Dendritic cell treated with granulocyte-macrophage colony-stimulating factor and Interleukin-4, amounts not matched to agents 40 ng/mL and 50 ng/mL, for 4 days (primary cell): ENCODE measurements at regions of chr2 and their contacts with region 1.

Region 1: GRCh38 chr2:39227628-39228412 is 15.9 kb downstream of the CDKL4 start:
- H3K4me3 Mint-ChIP-seq: peak overlapping the region; percentile 17
- H3K27ac Mint-ChIP-seq: no peak overlapping the region
- H3K4me1 Mint-ChIP-seq: peaks cover 5% of the 10 kb centered on the region
- H3K27me3 Mint-ChIP-seq: peaks cover 1% of the 10 kb centered on the region

Region 2: GRCh38 chr2:38947240-38948239 is 280.3 kb before region 1 on chr2:
- intact Hi-C with region 1: loop called (anchors 2 kb)
- H3K4me3 Mint-ChIP-seq: no peak overlapping the region
- H3K27ac Mint-ChIP-seq: no peak overlapping the region
- H3K4me1 Mint-ChIP-seq: peaks cover 30% of the 10 kb centered on the region
- H3K27me3 Mint-ChIP-seq: no peaks in the 10 kb centered on the region

Region 3: DNA sequence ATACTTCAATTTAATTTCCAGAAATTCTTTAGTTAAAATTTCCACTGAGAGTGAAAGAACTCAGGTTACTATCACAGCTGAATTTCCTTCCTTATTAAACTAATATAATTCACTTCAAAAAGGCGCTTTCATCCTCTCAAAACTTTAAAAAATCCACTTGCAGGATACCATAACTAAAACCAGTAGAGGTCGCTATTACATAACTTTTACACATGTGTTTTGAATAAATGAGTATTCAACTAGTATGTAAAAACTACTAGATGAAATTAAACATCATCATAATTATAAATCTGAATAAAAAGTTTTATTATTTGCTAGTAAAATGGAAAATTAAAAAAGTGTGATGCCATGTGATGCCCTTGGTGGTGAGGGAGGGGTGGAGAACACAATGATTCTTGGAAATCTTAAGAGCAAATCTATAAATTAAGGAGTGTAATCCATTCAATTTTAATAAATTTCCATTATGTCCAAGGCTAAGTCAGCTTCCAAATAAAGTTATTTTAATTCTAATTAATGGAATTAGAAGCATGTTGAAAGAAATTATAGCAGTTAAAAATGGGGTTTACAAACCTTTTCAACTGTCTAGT is 168.4 kb before region 1 on chr2:
- intact Hi-C with region 1: loop called (anchors 1 kb)
- H3K4me3 Mint-ChIP-seq: no peak overlapping the region
- H3K27ac Mint-ChIP-seq: no peak overlapping the region
- H3K4me1 Mint-ChIP-seq: no peaks in the 10 kb centered on the region
- H3K27me3 Mint-ChIP-seq: no peaks in the 10 kb centered on the region

Region 4: DNA sequence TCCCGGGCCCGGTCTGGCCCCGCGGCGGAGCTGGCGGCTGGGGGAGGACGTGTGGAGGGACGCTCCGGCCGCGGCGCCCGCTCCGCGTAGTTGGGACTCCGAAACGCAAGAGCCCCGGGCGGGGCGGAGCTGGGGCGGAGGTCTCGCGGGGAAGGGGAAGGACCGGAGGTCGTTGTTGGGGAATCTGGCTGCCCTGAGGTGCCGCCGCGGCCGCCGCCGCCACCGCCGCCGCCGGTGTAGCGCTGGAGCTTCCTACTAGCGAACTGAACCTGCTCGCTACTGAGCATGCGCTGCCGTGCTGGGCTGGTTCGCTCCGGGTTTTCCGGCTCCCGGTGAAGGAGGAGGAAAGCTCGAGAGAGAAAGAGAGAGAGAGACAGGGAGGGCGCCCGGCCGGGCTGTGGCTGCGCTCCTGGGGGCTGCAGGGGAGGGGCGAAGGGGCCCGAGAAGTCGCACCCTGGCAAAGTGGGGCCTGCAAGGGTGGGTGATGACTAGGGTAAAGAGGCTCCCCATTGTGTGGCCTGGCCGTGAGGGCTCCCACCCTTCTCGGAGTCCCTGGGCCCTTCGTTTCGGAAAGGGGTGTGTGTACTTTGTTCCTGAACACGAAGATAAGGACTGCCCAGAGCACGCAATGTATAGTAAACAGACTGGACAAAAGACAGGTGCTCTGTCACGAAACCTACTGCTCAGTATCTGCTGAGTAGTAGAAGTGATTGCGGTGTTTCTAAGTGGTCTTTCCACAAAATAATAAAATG is 106.9 kb before region 1 on chr2 and contains the start of gene SOS1:
- intact Hi-C with region 1: loop called (anchors 1 kb)
- H3K4me3 Mint-ChIP-seq: peak within 1 kb of the TSS; percentile 91
- H3K27ac Mint-ChIP-seq: peak within 1 kb of the TSS; percentile 97
- H3K4me1 Mint-ChIP-seq: peaks cover 72% of the 10 kb centered on the region
- H3K27me3 Mint-ChIP-seq: no peaks in the 10 kb centered on the region

Region 5: GRCh38 chr2:39435741-39436591 is 208.1 kb after region 1 on chr2:
- intact Hi-C with region 1: no loop called
- H3K4me3 Mint-ChIP-seq: peak overlapping the region; percentile 92
- H3K27ac Mint-ChIP-seq: peak overlapping the region; percentile 89
- H3K4me1 Mint-ChIP-seq: peaks cover 52% of the 10 kb centered on the region
- H3K27me3 Mint-ChIP-seq: peaks cover 7% of the 10 kb centered on the region

Region 6: DNA sequence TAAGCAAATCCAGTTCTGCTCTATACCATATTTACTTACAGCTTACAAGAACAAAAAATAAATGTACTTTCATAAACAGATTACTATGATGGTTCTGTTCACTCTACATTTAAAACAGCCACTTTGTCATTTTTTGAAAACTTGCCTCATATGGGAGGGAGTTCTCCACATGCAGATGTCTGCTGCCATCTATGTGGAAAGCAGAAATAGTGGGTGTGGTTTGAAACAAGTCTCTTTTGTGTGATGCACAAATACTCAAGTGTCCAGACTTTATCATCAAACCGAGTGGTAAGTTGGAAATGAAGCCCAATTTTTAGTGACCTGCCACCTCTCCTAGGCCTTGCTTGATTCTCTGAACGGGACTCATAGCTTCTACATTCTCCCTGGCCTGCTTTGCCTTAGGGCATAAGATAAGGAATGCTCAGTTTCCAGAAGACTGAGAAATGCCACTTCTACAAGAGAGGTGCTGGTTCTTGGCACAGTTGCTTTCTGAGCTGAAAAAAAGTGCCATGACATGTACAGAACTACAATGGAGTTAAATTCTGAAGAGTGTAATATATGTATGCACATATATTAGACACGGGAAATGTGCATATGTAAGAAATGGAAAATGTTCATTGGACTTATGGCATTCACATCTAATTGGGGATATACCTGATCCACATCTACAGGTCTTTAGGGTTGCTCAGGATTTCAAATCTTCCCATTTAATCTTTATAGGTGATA is 1003.0 kb after region 1 on chr2:
- intact Hi-C with region 1: no loop called
- H3K4me3 Mint-ChIP-seq: no peak overlapping the region
- H3K27ac Mint-ChIP-seq: no peak overlapping the region
- H3K4me1 Mint-ChIP-seq: no peaks in the 10 kb centered on the region
- H3K27me3 Mint-ChIP-seq: no peaks in the 10 kb centered on the region